ENCODE measurements at regions of chr2 and their contacts with region 1.

Region 1: DNA sequence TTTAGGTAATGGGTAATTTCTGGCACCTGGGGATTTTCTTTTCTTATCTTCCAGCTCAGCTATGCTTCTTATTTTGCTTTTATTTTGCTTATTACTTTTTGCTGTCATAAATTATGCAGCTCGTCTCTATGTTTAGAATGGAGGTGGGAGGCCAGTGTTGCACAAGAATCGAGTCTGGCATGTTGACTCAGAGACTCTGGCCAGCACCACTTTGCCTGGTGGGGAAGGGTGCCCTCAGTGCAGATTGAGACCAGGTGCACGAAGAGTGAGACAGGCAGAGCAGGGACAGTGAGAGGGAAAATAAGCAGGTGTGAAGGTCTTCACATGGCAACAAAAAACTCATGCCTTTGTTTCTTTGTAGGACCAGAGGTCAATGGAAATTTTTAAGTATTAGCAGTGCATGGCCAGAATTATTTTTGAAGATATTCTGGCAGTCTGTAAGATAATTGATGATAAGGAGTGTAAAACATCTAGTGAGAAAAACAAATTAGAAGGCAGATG is 59.2 kb upstream of the SLC5A7 start:
- DNase-seq: no peak
- ATAC-seq: no peak
- H3K4me3 ChIP-seq: no peak overlapping the region
- H3K27ac ChIP-seq: no peak overlapping the region
- H3K4me1 ChIP-seq: no peaks in the 10 kb centered on the region
- H3K27me3 ChIP-seq: no peaks in the 10 kb centered on the region
- CTCF ChIP-seq: no peak
- EP300 ChIP-seq: no peak
- POLR2A ChIP-seq: no peak
- RAD21 ChIP-seq: no peak

Region 2: GRCh38 chr2:106257830-106258229 is 1669.3 kb before region 1 on chr2:
- CTCF ChIA-PET with region 1: no interaction called
- POLR2A ChIA-PET with region 1: no interaction called
- in situ Hi-C with region 1: loop called (anchors 5 kb)
- intact Hi-C with region 1: no loop called
- DNase-seq: no peak
- ATAC-seq: no peak
- H3K4me3 ChIP-seq: no peak overlapping the region
- H3K27ac ChIP-seq: no peak overlapping the region
- H3K4me1 ChIP-seq: no peaks in the 10 kb centered on the region
- H3K27me3 ChIP-seq: peaks cover 8 to 22% of the 10 kb centered on the region in 2 experiments; a peak in 3 of 5 replicates
- CTCF ChIP-seq: no peak
- EP300 ChIP-seq: no peak
- POLR2A ChIP-seq: no peak
- RAD21 ChIP-seq: no peak

Measured in K562 (cell line).